ENCODE measurements at regions of chr14 and their contacts with region 1.

Region 1: GRCh38 chr14:51283402-51284085 is 43.5 kb downstream of the TMX1 start:
- DNase-seq: peak in 1 of 35 experiments; percentile 60
- ATAC-seq: peak in 1 of 4 experiments; percentile 50
- H3K4me3 ChIP-seq: no peak overlapping the region
- H3K4me3 Mint-ChIP-seq: no peak overlapping the region
- H3K27ac ChIP-seq: no peak overlapping the region
- H3K27ac Mint-ChIP-seq: no peak overlapping the region
- H3K4me1 ChIP-seq: no peaks in the 10 kb centered on the region
- H3K4me1 Mint-ChIP-seq: no peaks in the 10 kb centered on the region
- H3K27me3 ChIP-seq: no peaks in the 10 kb centered on the region
- H3K27me3 Mint-ChIP-seq: no peaks in the 10 kb centered on the region

Region 2: GRCh38 chr14:51248016-51248987 is 35.2 kb before region 1 on chr14:
- CTCF ChIA-PET with region 1: no interaction called
- POLR2A ChIA-PET with region 1: no interaction called
- DNase-seq: no peak
- ATAC-seq: no peak
- H3K4me3 ChIP-seq: no peak overlapping the region
- H3K4me3 Mint-ChIP-seq: no peak overlapping the region
- H3K27ac ChIP-seq: no peak overlapping the region
- H3K27ac Mint-ChIP-seq: no peak overlapping the region
- H3K4me1 ChIP-seq: peaks cover 0 to 8% of the 10 kb centered on the region in 2 experiments
- H3K4me1 Mint-ChIP-seq: peaks cover 25 to 28% (median 25%) of the 10 kb centered on the region in 3 donors
- H3K27me3 ChIP-seq: no peaks in the 10 kb centered on the region
- H3K27me3 Mint-ChIP-seq: no peaks in the 10 kb centered on the region

Region 3: GRCh38 chr14:51922624-51923023 is 639.1 kb after region 1 on chr14:
- CTCF ChIA-PET with region 1: no interaction called
- POLR2A ChIA-PET with region 1: interaction called in 1 of 2 experiments, 11 read pairs
- DNase-seq: no peak
- ATAC-seq: no peak
- H3K4me3 ChIP-seq: no peak overlapping the region
- H3K4me3 Mint-ChIP-seq: peak overlapping the region in 1 of 3 donors; percentile 28
- H3K27ac ChIP-seq: no peak overlapping the region
- H3K27ac Mint-ChIP-seq: peak overlapping the region; percentile 12 to 64
- H3K4me1 ChIP-seq: peaks cover 15% of the 10 kb centered on the region in 2 experiments
- H3K4me1 Mint-ChIP-seq: peaks cover 62 to 66% (median 65%) of the 10 kb centered on the region in 3 donors
- H3K27me3 ChIP-seq: no peaks in the 10 kb centered on the region
- H3K27me3 Mint-ChIP-seq: no peaks in the 10 kb centered on the region

Measured in T-cell (primary cell).